Head of caudate nucleus (tissue), 42 donors: ENCODE measurements at regions of chr3 and their contacts with region 1.

Region 1: GRCh38 chr3:170961616-170962400 is 53.4 kb upstream of the EIF5A2 start:
- DNase-seq: peak in 39 of 42 donors; percentile 13 to 82 (median 51)

Region 2: DNA sequence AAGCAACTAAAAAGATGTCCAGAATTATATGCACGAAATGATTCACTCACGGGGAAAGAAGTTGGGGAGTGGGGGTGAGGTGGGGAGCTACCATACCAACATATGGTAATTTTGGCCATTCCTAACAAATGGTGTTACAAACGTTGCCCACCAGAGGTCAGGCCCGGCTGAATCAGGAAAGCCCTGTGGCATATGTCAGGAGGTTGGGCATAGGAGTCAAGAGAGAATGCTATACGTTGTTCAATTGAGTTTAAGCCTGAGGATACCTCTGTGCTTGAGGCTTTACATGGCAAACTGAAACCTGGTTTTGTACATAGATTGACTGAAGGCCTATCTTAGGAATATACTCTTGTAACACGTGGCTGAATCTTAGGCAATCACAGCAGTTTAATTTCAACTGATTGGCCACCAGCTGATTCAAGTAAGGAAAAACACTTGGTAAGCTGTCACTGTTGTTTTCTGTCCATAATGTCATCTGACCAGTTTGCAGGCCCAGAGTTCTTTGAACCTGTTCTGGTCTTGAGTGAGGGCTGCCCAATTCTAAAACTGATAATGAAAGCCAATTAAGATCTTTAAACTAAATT is 88.1 kb after region 1 on chr3:
- intact Hi-C with region 1: loop called (anchors 10 kb)
- DNase-seq: peak in 41 of 42 donors; percentile 18 to 84 (median 59)